Posterior cingulate gyrus (tissue), 11 donors: ENCODE measurements at regions of chr2 and their contacts with region 1.

Region 1: DNA sequence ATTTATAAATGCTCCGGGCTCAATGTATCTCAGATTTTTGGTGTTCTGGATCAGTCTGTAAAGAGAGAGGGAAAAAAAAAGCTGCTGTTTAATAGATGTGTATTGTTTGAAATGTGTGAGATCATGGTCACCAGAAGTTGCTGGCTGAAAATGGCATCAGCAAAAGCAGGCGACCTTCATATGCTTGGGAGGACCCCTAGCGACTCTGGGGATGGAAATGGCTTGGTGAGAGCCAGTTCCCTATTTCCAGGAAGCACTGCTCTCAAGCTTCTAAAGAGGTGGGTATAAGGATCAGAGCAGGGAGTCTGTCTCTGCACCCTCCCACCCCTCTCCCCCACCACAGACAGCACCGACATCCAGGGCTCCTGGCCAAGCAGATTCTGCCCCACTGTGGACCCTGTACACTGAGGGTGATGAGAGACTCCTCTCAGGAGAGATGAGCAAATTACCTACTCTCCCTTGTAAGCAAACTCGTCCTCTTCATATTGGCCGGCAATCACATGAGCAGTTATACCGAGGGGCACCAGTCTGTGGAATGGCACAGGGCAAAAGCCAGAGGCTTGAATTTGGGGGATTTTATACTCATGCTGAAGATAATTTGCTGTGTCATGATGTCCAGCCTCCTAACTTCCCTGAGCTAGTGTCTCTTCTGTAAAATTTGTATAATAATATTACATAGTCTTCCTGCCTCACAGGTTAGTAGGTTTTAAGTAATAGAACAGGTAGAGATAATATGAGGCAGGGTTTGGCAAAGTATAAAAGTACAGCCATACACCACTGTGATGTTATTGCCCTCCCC is 29.6 kb downstream of the LHCGR start:
- DNase-seq: peak in 3 of 10 donors; percentile 42 to 66 (median 51)

Region 2: DNA sequence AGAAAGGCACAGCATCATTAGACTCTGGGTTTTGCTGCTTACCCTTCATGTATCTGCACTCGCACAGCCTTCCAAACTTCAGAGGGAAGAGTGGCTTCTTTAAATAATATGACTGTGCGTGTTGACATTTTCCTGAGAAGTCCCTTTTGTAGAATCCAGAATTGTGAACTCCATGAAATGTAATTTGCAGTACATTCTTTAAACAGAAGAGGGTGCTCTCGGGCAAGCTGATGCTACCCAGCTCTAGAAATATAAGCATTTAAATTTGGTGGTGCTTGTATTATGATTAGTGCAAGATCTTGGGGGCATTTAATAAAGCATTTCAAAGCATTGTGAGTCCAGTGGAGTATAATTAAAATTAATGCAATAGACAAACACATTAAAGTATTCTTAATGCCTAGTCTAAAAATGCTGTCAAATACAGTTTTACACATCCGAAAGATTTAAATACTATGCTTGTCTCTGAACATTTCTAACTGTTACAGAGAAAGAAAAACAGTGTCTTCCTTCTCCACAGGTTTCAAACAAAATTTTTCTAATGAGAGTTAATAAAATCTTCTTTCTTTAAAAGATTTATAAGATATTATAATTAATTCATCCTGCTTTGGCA is 125.6 kb before region 1 on chr2:
- intact Hi-C with region 1: loop called (anchors 1 kb)
- DNase-seq: no peak